MCF 10A (cell line): ENCODE measurements at regions of chr1 and their contacts with region 1.

Region 1: GRCh38 chr1:170692866-170693575 is 29.1 kb downstream of the PRRX1 start:
- DNase-seq: peak; percentile 35
- H3K4me3 Mint-ChIP-seq: no peak overlapping the region
- H3K27ac Mint-ChIP-seq: no peak overlapping the region
- H3K4me1 Mint-ChIP-seq: peaks cover 21% of the 10 kb centered on the region
- H3K27me3 Mint-ChIP-seq: no peaks in the 10 kb centered on the region
- CTCF ChIP-seq: no peak

Region 2: DNA sequence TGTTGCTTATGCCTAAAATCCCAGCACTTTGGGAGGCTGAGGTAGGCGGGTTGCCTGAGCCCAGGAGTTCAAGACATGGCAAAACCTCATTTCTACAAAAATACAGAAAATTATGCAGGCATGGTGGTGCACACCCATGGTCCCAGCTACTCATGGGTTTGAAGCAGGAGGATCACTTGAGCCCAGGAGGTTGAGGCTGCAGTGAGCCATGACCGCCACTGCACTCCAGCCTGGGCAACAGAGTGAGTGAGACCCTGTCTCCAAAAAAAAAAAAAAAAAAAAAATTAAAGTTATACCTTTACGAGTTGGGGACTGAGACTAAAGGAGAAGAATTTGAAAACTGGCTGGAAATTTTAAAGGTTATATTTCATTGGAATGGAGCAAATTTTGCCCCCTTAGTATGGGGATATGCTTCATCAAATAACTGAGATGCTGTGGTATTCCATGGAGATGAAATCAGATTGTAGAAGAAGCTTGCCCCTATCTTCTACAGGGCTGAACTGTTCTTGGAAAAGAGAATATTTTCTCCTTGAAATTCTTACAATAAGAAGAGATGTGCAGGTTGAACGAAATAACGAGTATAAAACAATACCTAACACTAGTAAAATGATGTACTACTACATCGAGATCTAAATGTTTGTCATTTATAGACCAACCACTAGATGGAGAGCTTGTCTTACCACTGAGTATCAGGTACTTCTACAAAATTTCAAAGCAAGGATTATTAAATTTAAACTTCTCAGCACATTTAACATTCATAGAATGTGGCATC is 764.4 kb before region 1 on chr1:
- CTCF ChIA-PET with region 1: interaction called, 6 read pairs
- POLR2A ChIA-PET with region 1: no interaction called
- intact Hi-C with region 1: loop called (anchors 1 kb)
- DNase-seq: peak; percentile 67
- H3K4me3 Mint-ChIP-seq: no peak overlapping the region
- H3K27ac Mint-ChIP-seq: no peak overlapping the region
- H3K4me1 Mint-ChIP-seq: no peaks in the 10 kb centered on the region
- H3K27me3 Mint-ChIP-seq: no peaks in the 10 kb centered on the region
- CTCF ChIP-seq: peak; percentile 84

Region 3: DNA sequence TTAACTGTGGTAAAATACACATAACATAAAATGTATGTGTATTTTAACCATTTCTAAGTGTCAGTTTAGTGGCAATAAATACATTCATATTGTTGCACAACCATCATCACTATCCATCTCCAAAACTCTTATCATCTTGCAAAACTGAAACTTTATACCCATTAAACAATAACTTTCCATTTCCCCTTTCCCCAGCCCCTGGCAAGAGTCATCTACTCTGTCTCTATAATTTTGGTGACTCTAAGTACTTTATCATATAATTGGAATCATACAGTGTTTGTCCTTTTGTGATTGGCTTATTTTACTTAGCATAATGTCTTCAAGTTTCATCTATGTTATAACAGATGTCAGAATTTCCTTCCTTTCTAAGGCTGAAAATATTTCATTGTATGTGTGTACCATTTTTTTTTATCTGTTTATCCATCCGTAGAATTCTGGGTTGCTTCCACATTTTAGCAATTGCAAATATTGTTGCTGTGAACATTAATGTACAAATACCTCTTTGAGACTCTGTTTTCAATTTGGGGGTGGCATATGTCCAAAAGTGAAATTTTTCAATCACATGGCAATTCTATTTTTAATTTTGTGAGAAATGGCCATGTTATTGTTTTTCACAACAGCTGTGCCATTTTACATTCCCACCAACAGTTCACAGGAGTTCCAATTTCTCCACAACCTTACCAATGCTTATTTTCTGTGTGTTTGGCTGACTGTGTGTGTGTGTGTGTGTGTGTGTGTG is 315.0 kb before region 1 on chr1:
- CTCF ChIA-PET with region 1: no interaction called
- POLR2A ChIA-PET with region 1: no interaction called
- intact Hi-C with region 1: no loop called
- DNase-seq: no peak
- H3K4me3 Mint-ChIP-seq: no peak overlapping the region
- H3K27ac Mint-ChIP-seq: no peak overlapping the region
- H3K4me1 Mint-ChIP-seq: no peaks in the 10 kb centered on the region
- H3K27me3 Mint-ChIP-seq: no peaks in the 10 kb centered on the region
- CTCF ChIP-seq: no peak

Region 4: GRCh38 chr1:170531758-170532657 is 161.0 kb before region 1 on chr1 and contains the start of gene GORAB:
- CTCF ChIA-PET with region 1: interaction called, 12 read pairs
- POLR2A ChIA-PET with region 1: interaction called, 3 read pairs
- intact Hi-C with region 1: loop called (anchors 5 kb)
- DNase-seq: peak; percentile 97
- H3K4me3 Mint-ChIP-seq: no peak within 1 kb of the TSS
- H3K27ac Mint-ChIP-seq: no peak within 1 kb of the TSS
- H3K4me1 Mint-ChIP-seq: peaks cover 9% of the 10 kb centered on the region
- H3K27me3 Mint-ChIP-seq: no peaks in the 10 kb centered on the region
- CTCF ChIP-seq: no peak
- total RNA-seq, gene GORAB: 14.0 and 15.1 TPM in 2 replicates

Region 5: GRCh38 chr1:170674239-170674638 is 18.8 kb before region 1 on chr1:
- CTCF ChIA-PET with region 1: interaction called, 13 read pairs
- POLR2A ChIA-PET with region 1: no interaction called
- intact Hi-C with region 1: no loop called
- DNase-seq: no peak
- H3K4me3 Mint-ChIP-seq: no peak overlapping the region
- H3K27ac Mint-ChIP-seq: no peak overlapping the region
- H3K4me1 Mint-ChIP-seq: no peaks in the 10 kb centered on the region
- H3K27me3 Mint-ChIP-seq: no peaks in the 10 kb centered on the region
- CTCF ChIP-seq: no peak

Region 6: DNA sequence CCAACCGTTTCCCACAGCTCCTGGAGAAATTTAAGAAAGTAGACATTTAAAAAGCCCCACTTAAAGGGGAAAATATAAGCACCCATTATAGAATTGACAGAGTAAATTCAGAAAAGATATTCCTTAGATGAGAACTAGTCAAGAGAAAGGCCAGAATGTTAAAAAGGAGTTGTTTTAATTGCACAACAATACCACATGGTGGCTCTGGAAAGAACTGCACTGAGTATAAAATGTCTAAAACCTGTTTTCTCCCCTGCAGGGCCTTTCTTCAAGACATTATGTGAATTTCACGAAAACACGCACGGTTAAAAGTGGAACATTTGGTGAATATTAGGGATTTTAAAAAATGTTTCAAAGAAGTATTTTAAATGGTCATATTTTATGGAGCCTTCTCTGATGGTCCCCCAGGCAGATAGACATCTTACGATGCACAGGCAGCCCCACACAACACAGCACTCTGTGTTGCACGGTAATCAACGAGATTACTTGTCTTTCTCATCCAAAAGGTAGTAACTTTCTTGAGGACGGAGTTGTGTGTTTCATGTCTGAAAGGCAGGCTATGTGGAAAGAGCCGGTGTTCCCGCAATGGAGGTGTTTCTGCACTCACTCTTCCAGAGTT is 72.8 kb after region 1 on chr1:
- CTCF ChIA-PET with region 1: interaction called, 26 read pairs
- POLR2A ChIA-PET with region 1: no interaction called
- intact Hi-C with region 1: loop called (anchors 1 kb)
- DNase-seq: peak; percentile 54
- H3K4me3 Mint-ChIP-seq: no peak overlapping the region
- H3K27ac Mint-ChIP-seq: no peak overlapping the region
- H3K4me1 Mint-ChIP-seq: no peaks in the 10 kb centered on the region
- H3K27me3 Mint-ChIP-seq: no peaks in the 10 kb centered on the region
- CTCF ChIP-seq: peak; percentile 74

Region 7: DNA sequence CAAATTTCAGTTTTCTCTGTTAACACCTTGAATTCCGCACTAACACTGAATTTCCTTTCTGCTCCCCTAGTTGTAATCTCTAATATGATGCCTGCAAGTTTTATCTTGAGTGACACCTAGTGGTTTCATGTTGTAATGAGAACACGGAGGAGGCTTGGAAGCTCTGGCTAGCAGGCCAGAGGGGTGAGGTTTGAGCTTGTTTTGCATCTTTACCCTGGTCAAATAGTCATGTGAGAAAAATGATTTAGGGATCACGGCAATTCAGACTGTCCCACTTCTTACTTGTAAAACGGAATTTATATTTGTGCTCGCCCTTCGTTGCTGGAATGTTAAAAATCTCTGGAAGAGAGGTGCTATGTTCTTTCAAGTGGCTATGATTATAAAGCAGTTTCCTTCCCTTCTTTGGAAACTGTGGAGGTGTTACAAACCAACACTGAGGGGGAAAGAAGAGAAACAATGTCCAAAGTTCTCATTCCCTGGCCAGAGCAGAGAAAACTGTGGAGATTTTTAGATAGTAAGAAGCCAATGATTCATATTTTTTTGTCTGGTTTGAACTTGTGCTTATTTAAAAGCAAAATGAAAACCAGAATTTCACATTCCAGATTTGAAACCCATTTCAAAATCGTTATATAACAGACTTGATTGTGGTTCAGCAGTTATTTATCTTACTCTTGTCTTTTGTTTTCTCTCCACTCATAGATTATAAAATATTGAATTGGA is 237.0 kb after region 1 on chr1:
- CTCF ChIA-PET with region 1: interaction called, 24 read pairs
- POLR2A ChIA-PET with region 1: no interaction called
- intact Hi-C with region 1: loop called (anchors 1 kb)
- DNase-seq: peak; percentile 83
- H3K4me3 Mint-ChIP-seq: no peak overlapping the region
- H3K27ac Mint-ChIP-seq: peak overlapping the region; percentile 4
- H3K4me1 Mint-ChIP-seq: peaks cover 12% of the 10 kb centered on the region
- H3K27me3 Mint-ChIP-seq: no peaks in the 10 kb centered on the region
- CTCF ChIP-seq: peak; percentile 78

Region 8: GRCh38 chr1:171017426-171017825 is 324.4 kb after region 1 on chr1:
- CTCF ChIA-PET with region 1: no interaction called
- POLR2A ChIA-PET with region 1: no interaction called
- intact Hi-C with region 1: no loop called
- DNase-seq: no peak
- H3K4me3 Mint-ChIP-seq: no peak overlapping the region
- H3K27ac Mint-ChIP-seq: no peak overlapping the region
- H3K4me1 Mint-ChIP-seq: no peaks in the 10 kb centered on the region
- H3K27me3 Mint-ChIP-seq: no peaks in the 10 kb centered on the region
- CTCF ChIP-seq: no peak